Activated naive CD8-positive, alpha-beta T cell treated with anti-CD3 and anti-CD28 coated beads, Interleukin-2, amount 10 ng/mL, durations not matched to agents 7 days and 5 days (primary cell): ENCODE measurements at regions of chr18 and their contacts with region 1.

Region 1: GRCh38 chr18:830315-830901 is 18.4 kb upstream of the YES1 start:
- DNase-seq: no peak
- ATAC-seq: peak; percentile 73
- H3K4me3 Mint-ChIP-seq: peak overlapping the region; percentile 64
- H3K27ac Mint-ChIP-seq: peak overlapping the region; percentile 74
- H3K4me1 Mint-ChIP-seq: peaks cover 19% of the 10 kb centered on the region
- H3K27me3 Mint-ChIP-seq: no peaks in the 10 kb centered on the region

Region 2: GRCh38 chr18:712401-713134 is 117.8 kb before region 1 on chr18 and contains the start of gene ENOSF1:
- POLR2A ChIA-PET with region 1: interaction called, 11 read pairs
- DNase-seq: peak; percentile 95
- ATAC-seq: peak; percentile 92
- H3K4me3 Mint-ChIP-seq: peak within 1 kb of the TSS; percentile 88
- H3K27ac Mint-ChIP-seq: peak within 1 kb of the TSS; percentile 85
- H3K4me1 Mint-ChIP-seq: peaks cover 30% of the 10 kb centered on the region
- H3K27me3 Mint-ChIP-seq: no peaks in the 10 kb centered on the region
- total RNA-seq, gene ENOSF1: 76.0 to 79.5 TPM

Region 3: GRCh38 chr18:812376-813171 is 17.8 kb before region 1 on chr18:
- POLR2A ChIA-PET with region 1: interaction called, 30 read pairs
- DNase-seq: peak; percentile 88
- ATAC-seq: peak; percentile 59
- H3K4me3 Mint-ChIP-seq: peak overlapping the region; percentile 93
- H3K27ac Mint-ChIP-seq: peak overlapping the region; percentile 100
- H3K4me1 Mint-ChIP-seq: peaks cover 60% of the 10 kb centered on the region
- H3K27me3 Mint-ChIP-seq: no peaks in the 10 kb centered on the region

Region 4: DNA sequence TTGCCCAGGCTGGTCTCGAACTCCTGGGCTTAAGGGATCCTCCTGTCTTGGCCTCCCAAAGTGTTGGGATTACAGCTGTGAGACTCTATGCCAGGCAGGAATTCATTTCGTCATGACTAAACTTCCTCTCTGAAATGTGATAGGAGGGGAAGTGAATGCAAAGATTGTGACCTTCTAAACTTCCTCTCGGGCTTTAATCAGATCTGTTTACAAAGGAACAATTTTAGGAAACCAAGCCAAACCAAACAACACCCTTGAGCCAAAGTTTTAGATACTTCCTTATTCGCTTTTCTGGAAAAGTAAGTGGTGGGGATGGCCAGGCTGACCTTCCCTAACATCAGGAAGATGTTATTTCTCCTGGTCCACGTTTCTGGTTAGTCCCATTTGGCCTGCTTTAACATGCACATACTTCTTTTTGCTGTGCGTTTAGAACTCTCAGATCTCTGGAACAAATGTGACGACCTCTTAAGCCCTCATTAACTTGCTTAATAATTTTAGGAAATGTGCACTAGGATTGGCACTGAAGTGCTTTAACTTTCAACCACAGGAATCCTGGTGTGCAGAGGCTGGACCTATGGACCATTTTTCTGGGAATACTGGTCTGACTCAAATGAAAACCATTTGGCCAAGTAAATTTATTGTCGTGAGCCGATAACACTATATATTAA is 14.9 kb after region 1 on chr18:
- POLR2A ChIA-PET with region 1: no interaction called
- DNase-seq: no peak
- ATAC-seq: no peak
- H3K4me3 Mint-ChIP-seq: no peak overlapping the region
- H3K27ac Mint-ChIP-seq: no peak overlapping the region
- H3K4me1 Mint-ChIP-seq: no peaks in the 10 kb centered on the region
- H3K27me3 Mint-ChIP-seq: peaks cover 7% of the 10 kb centered on the region